ENCODE measurements at regions of chr15 and their contacts with region 1.

Region 1: DNA sequence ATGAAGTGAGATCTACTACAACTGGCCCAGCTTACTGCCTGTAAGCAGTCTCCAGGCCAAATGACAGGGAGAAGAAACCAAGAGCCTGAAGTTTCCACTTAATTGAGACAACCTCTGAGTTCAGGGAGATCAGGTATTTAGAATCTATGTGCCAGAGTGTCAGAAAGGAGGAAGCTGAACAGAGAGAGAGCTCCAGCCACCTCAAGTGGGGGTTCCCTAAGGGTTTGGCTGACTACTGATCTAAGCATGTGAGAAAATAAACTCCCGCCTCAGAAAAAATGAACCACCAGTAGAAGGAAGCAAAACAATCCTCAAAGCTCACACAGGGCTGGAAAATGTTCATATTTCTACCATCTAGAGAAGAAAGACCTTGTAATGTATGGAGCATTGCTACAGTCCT is 25.0 kb downstream of the ADAM10 start:
- DNase-seq: peak; percentile 71
- ATAC-seq: peak; percentile 93
- H3K4me3 ChIP-seq: no peak overlapping the region; the same call in 1 of the 2 replicates
- H3K27ac ChIP-seq: peak overlapping the region; percentile 78
- H3K4me1 ChIP-seq: peaks cover 9% of the 10 kb centered on the region
- H3K27me3 ChIP-seq: no peaks in the 10 kb centered on the region
- CTCF ChIP-seq: no peak
- EP300 ChIP-seq: no peak
- POLR2A ChIP-seq: no peak
- RAD21 ChIP-seq: no peak

Region 2: GRCh38 chr15:58677426-58677825 is 47.0 kb before region 1 on chr15:
- CTCF ChIA-PET with region 1: interaction called, 5 read pairs
- POLR2A ChIA-PET with region 1: no interaction called
- RAD21 ChIA-PET with region 1: no interaction called
- SMC1A ChIA-PET with region 1: interaction called, 11 read pairs
- in situ Hi-C with region 1: no loop called
- intact Hi-C with region 1: no loop called
- DNase-seq: no peak
- ATAC-seq: no peak
- H3K4me3 ChIP-seq: no peak overlapping the region
- H3K27ac ChIP-seq: no peak overlapping the region
- H3K4me1 ChIP-seq: no peaks in the 10 kb centered on the region
- H3K27me3 ChIP-seq: no peaks in the 10 kb centered on the region
- CTCF ChIP-seq: peak in 1 of 3 experiments; percentile 29; a peak in 1 of 6 replicates
- EP300 ChIP-seq: no peak
- POLR2A ChIP-seq: no peak
- RAD21 ChIP-seq: peak; percentile 47

Region 3: DNA sequence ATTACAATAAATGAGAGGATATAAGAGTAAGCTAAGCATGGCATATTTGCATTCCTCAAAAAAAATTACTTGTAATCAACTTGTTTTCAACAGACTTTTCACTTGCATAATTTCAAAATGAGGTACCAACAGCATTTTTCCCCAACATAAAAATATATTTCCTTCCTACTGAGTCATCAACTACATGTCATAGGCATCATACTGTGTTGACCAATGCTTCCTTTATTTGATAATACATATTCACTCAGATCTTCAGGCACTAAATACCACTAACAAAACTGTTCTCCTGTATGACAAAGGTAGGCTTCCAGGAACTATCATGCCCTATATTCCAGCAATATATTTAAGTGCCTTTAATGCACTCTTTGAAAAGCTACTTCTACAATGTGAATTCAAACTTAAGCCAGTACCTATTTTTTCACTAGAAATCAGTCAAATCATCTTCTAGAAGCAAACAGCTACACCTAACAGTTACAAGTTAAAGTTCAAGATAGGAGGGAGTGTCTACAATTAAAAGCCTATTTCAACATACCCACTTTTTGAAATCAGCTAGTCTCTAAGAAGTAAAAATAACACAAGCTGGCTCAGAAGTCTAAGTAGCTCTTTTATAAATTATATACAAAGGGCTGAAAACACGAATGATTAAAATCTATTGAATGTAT is 13.7 kb after region 1 on chr15:
- CTCF ChIA-PET with region 1: interaction called, 17 read pairs
- POLR2A ChIA-PET with region 1: interaction called, 6 read pairs
- RAD21 ChIA-PET with region 1: interaction called, 17 read pairs
- SMC1A ChIA-PET with region 1: interaction called, 19 read pairs
- in situ Hi-C with region 1: no loop called
- intact Hi-C with region 1: no loop called
- DNase-seq: no peak
- ATAC-seq: no peak
- H3K4me3 ChIP-seq: no peak overlapping the region
- H3K27ac ChIP-seq: no peak overlapping the region
- H3K4me1 ChIP-seq: no peaks in the 10 kb centered on the region
- H3K27me3 ChIP-seq: no peaks in the 10 kb centered on the region
- CTCF ChIP-seq: no peak
- EP300 ChIP-seq: no peak
- POLR2A ChIP-seq: no peak
- RAD21 ChIP-seq: no peak

Region 4: DNA sequence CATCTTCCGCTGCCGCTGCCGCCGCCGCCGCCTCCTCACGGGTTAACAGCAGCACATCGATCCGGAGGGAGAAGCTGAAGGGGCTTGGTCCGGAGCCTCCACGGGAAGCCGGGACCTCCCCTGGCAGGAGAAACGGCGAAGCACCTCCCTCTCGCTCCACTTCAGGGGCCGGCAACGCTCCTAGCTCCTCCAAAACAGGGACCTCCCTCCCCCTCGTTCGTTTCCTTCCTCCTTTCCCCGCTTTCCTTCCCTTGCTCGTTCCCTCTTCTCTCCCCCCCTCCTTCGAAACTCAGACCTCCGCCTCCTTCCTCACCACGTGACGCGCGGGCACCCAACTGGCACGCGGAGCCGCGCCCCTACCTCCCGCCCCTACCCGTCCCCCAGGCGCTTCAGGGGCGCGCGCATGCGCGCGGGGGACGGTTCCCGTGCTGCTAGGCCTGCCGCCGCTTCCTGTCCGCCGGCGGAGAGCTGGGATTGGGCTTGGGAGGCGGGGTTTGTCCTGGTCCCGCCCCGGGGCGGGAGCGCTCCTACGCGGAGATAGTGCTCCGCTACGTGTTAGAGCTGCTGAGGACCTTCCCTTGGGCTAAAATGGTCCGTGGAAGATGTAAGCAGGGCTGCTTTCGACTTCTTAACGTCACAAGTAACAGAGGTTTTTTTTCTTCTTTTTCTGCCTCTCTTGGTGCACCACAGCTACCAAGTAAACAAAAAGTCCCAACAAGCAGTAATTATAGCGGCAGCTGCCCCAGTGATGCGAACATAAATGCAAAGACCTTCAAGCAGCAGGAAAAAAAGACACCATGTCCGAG is 25.3 kb after region 1 on chr15 and contains the start of gene ADAM10:
- CTCF ChIA-PET with region 1: interaction called, 6 read pairs
- POLR2A ChIA-PET with region 1: interaction called, 10 read pairs
- RAD21 ChIA-PET with region 1: interaction called, 11 read pairs
- SMC1A ChIA-PET with region 1: interaction called, 40 read pairs
- in situ Hi-C with region 1: no loop called
- intact Hi-C with region 1: no loop called
- DNase-seq: peak; percentile 90
- ATAC-seq: peak; percentile 91
- H3K4me3 ChIP-seq: peak within 1 kb of the TSS; percentile 94
- H3K27ac ChIP-seq: peak within 1 kb of the TSS; percentile 91
- H3K4me1 ChIP-seq: no peaks in the 10 kb centered on the region
- H3K27me3 ChIP-seq: no peaks in the 10 kb centered on the region
- CTCF ChIP-seq: no peak
- EP300 ChIP-seq: no peak
- POLR2A ChIP-seq: peak; percentile 80
- RAD21 ChIP-seq: no peak; the same call in 1 of the 2 replicates
- polyA plus RNA-seq, gene ADAM10: 10.0 to 11.1 TPM